HEK293 (cell line): ENCODE measurements at regions of chr18 and their contacts with region 1.

Region 1: DNA sequence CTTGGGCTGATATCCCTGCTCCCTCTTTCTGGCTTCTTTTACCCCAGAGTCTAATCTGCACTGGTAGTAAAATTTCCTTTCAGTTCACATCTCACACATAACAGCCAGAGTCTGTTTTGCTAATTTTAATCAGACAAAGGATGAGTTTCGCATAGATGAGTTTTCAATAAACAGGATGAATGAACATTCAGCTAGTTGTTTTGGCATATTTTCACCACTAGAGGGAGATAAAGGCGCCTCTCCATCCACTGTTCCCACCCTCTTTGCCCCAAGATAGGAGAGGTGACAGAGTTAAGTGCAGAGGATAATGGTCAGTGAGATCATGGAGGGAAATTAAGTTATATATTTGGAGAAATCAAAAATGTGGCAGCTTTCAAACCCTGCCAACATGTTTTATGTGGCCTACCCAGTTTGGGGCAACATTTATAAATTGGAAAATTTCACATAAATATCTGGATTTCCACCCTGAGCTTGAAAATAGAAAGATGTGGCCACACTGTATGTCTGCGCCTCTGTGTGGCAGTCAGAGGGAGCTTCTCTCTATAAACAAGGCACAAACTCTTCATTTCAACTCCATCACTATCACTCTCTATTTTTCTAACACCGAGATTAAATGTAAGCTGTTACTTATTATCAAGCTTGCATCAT is 48.5 kb upstream of the DTNA start:
- H3K4me3 ChIP-seq: no peak overlapping the region
- H3K27ac ChIP-seq: no peak overlapping the region
- H3K4me1 ChIP-seq: peaks cover 5% of the 10 kb centered on the region
- CTCF ChIP-seq: peak; percentile 50

Region 2: DNA sequence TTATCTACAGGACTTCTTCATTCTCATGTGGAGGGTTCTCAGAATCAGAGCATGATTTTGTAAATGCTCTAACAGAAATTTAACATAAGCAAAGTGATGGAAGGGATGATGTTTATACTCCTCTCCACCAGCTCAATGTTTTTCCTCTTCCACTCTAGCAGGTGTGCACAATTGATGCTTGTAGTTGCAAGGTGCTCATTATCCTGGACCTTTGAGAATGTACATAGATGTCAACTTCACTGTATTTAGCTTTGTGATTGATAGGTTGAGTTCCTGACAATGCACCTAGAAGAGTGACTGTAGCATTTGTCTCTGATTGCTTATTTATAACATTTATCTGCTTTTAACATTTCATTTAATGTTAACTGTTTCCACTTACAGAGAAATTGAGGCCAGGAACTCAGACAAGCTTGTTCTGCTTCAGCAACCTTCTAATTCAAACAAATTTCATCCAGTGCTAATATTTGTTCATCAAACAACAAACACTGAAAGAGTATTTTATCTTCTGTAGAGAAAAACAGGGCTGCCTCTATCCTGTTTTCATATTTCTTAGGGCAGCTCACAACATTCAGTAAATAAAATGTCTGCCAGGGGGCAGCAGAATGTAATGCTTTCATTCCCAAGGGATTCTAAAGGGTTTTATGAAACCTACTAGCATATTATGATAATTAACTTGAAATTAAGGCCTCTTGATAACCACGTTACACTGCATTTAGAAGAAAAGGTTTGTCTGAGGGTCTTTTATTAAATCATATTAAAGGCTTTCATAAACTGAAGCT is 309.0 kb before region 1 on chr18:
- CTCF ChIA-PET with region 1: interaction called, 22 read pairs
- POLR2A ChIA-PET with region 1: no interaction called
- H3K4me3 ChIP-seq: no peak overlapping the region
- H3K27ac ChIP-seq: no peak overlapping the region
- H3K4me1 ChIP-seq: no peaks in the 10 kb centered on the region
- CTCF ChIP-seq: no peak

Region 3: GRCh38 chr18:34512389-34512788 is 149.2 kb before region 1 on chr18:
- CTCF ChIA-PET with region 1: no interaction called
- POLR2A ChIA-PET with region 1: no interaction called
- H3K4me3 ChIP-seq: no peak overlapping the region
- H3K27ac ChIP-seq: no peak overlapping the region
- H3K4me1 ChIP-seq: no peaks in the 10 kb centered on the region
- CTCF ChIP-seq: no peak

Region 4: DNA sequence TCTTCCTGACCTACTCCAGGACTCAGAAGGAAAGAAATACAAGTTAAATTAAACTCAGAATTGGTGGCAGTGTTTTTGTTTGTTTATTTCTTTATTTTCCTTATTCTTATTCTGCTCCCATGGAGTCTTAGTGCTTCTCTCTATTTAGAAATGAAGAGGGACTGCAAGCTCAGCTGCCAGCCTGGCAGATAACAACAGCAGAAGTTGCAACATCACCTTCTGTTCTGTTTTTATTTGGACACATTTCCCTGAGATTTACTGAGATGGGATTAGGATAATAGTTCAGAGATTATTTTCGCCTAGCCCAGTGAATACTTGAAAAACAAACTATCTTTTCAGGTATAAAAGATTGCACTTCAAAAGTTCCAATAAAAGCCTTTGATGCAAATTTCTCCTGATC is 21.9 kb before region 1 on chr18:
- CTCF ChIA-PET with region 1: interaction called, 29 read pairs
- POLR2A ChIA-PET with region 1: interaction called, 3 read pairs
- H3K4me3 ChIP-seq: no peak overlapping the region
- H3K27ac ChIP-seq: no peak overlapping the region
- H3K4me1 ChIP-seq: 0 out of 2 replicates have a peak, but pooled peaks cover 2% of the 10 kb centered on the region
- CTCF ChIP-seq: no peak

Region 5: DNA sequence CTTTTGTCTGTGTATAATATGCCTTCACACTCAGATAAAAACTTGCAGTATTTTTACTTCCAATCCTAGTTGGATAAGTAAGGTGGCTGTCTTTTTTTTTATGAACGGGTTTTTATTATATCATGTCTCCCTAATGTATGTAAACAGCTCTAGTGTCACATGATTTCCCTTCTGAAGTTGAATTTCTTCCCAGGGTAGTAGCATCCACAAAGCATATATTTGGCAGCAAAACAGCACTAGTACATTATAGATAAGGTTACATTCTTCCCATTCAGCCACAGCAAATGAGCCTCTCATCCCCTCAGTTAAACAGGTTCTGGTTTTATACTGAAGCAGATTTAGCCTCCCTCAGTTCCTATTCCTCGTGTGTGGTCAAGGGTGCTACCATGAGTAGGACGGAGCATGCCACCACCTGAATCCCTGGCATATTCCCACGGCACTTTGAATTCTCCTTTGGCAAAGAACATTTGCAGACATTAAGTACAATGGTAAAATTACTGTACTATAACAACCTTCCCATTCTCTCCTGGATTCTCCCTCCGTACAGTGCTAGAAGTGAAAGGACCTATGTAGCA is 33.1 kb after region 1 on chr18:
- CTCF ChIA-PET with region 1: interaction called, 18 read pairs
- POLR2A ChIA-PET with region 1: no interaction called
- H3K4me3 ChIP-seq: no peak overlapping the region
- H3K27ac ChIP-seq: no peak overlapping the region
- H3K4me1 ChIP-seq: no peaks in the 10 kb centered on the region; the same call in 1 of the 2 replicates
- CTCF ChIP-seq: no peak

Region 6: DNA sequence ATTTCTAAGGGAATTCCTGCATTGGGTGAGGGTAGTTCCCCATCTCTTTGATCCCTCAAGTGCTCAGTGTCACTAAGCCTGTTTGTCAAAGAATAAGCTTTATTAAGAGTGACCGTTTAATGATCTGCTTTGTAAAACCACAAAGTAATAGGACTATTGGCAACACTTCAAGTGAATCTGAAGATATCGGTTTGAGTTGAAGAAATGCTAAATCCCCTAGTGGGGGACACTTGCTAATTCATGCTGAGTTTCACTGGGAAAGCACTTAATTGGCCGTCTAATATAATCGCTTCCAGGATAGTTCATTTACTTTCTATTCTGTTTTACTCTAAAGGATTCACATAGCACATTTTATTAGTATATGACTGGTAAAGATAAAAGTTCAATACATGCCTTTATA is 102.9 kb after region 1 on chr18:
- CTCF ChIA-PET with region 1: interaction called, 12 read pairs
- POLR2A ChIA-PET with region 1: no interaction called
- H3K4me3 ChIP-seq: no peak overlapping the region
- H3K27ac ChIP-seq: no peak overlapping the region
- H3K4me1 ChIP-seq: no peaks in the 10 kb centered on the region
- CTCF ChIP-seq: no peak

Region 7: DNA sequence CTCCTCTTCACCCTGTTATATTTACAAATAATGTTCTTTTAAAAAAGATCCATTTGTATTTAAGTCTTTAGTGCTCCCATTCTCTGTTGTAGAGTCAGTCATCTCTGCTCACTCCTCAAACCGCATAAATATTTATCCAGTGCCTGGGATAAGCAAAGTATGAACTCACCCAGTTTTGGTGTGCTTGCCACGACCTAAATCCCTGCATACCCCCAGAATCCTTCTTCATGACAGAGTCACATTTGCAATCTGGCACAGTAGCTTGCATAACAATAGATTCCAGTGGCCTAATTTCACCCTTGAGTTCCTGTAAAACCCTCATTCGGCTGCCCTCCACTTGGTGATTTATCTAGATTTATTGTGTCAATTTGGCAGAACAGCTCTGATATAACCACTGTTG is 141.3 kb after region 1 on chr18:
- CTCF ChIA-PET with region 1: interaction called, 16 read pairs
- POLR2A ChIA-PET with region 1: no interaction called
- H3K4me3 ChIP-seq: no peak overlapping the region
- H3K27ac ChIP-seq: no peak overlapping the region
- H3K4me1 ChIP-seq: no peaks in the 10 kb centered on the region
- CTCF ChIP-seq: no peak